ENCODE measurements at regions of chr20 and their contacts with region 1.

Region 1: DNA sequence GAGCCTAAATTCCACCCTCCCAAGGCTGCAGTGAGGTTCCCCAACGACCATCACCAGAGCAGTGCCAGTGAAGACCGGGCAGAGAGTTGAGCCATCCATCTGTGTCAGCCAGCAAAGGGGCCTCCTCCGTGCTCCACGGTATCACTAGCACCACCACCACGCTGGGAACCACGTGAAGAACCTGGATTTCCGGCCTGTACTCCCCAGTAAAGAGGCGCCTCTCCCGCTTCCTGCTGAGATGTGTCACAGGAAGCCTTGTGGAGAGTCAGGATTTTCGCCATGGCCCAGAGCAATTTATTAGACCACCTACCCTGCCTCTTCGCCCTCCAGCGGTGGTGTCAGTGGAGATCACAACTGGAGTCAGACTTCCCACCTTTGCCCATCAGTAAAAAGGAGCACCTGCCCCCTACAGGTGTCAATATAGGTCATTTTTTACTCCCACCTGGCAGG is 28.8 kb downstream of the CPXM1 start:
- DNase-seq: peak; percentile 40
- ATAC-seq: peak; percentile 13; the same call in 1 of the 2 replicates
- H3K4me3 ChIP-seq: no peak overlapping the region
- H3K27ac ChIP-seq: no peak overlapping the region
- H3K4me1 ChIP-seq: peaks cover 23% of the 10 kb centered on the region
- H3K27me3 ChIP-seq: no peaks in the 10 kb centered on the region
- CTCF ChIP-seq: no peak; the same call in 1 of the 2 replicates

Region 2: DNA sequence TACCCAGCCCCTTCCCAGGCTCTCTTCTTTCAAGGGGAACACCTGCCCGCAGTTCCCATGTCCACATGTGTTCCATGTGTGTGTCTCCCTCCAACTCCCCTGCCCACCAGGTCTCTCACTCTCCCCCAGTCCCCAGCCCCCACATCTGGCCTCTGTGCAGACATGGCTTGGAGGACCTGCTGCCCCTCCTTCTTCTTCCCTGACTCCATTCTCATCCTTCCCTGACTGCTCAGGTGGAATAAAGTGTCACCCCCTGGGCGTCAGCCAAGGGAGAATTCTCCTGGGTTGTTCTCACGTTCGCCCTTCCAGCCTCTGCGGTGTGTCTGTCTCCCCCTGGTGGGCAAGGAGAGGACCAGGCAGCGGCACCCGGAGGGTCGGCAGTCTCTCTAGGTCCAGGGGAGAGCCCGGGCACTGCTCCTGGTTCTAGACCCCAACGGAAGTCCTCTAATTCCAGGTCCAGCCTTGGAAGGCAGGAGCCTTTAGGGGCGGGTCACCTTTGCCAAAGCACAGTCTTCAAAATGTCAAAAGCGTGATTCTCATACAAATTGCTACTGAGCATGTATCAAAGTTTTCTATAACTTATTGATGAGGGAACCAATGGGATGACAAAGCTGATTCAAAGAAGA is 28.6 kb before region 1 on chr20:
- CTCF ChIA-PET with region 1: no interaction called
- POLR2A ChIA-PET with region 1: no interaction called
- intact Hi-C with region 1: no loop called
- DNase-seq: peak; percentile 86
- ATAC-seq: peak; percentile 78
- H3K4me3 ChIP-seq: no peak overlapping the region; the same call in 1 of the 2 replicates
- H3K27ac ChIP-seq: no peak overlapping the region
- H3K4me1 ChIP-seq: 0 out of 2 replicates have a peak, but pooled peaks cover 5% of the 10 kb centered on the region
- H3K27me3 ChIP-seq: no peaks in the 10 kb centered on the region; the same call in 1 of the 2 replicates
- CTCF ChIP-seq: peak; percentile 98

Region 3: GRCh38 chr20:2804852-2805688 is 33.4 kb after region 1 on chr20:
- CTCF ChIA-PET with region 1: no interaction called
- POLR2A ChIA-PET with region 1: no interaction called
- intact Hi-C with region 1: no loop called
- DNase-seq: no peak
- ATAC-seq: no peak
- H3K4me3 ChIP-seq: no peak overlapping the region
- H3K27ac ChIP-seq: no peak overlapping the region
- H3K4me1 ChIP-seq: no peaks in the 10 kb centered on the region
- H3K27me3 ChIP-seq: no peaks in the 10 kb centered on the region
- CTCF ChIP-seq: no peak

Region 4: GRCh38 chr20:2829376-2829775 is 57.7 kb after region 1 on chr20:
- CTCF ChIA-PET with region 1: interaction called, 12 read pairs
- POLR2A ChIA-PET with region 1: no interaction called
- intact Hi-C with region 1: no loop called
- DNase-seq: no peak
- ATAC-seq: no peak
- H3K4me3 ChIP-seq: no peak overlapping the region
- H3K27ac ChIP-seq: no peak overlapping the region
- H3K4me1 ChIP-seq: peaks cover 16% of the 10 kb centered on the region
- H3K27me3 ChIP-seq: no peaks in the 10 kb centered on the region
- CTCF ChIP-seq: no peak

Region 5: DNA sequence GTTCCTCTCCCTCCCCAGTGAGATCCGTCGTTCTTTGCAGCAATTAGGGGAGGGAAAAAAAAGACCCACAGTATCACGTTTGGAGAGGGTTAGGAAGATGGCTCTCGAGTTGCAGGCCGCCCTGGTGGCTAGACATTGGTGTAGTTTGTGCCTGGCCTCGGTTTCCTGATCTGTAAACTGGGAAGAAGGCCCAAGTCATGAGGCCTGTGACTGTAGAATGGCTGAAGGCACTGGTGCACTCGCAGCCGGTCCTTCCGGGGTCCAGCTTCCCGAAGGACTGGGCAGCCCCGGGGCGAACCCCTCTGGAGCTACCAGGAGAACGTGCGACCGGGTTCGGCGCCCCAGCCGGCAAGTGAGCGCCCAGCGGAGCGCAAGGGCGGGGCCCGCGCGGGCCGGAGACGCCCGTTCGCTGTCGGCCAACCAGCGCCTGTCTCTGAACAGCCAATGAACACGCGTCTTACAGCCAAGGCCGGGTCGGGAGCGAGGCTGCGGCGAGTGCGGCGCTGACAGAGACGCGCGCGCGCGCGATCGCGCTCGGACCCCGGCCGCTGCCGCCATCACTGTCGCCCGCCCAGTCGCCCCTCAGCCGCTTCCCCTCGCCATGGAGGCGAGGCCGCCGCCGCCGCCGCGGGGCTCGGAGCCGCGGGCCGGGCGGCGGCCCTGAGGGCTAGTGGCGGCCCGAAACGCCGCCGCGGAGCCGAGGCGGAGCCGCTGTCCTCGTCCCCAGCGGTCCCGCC is 101.5 kb after region 1 on chr20 and contains the start of gene PTPRA:
- CTCF ChIA-PET with region 1: no interaction called
- POLR2A ChIA-PET with region 1: no interaction called
- intact Hi-C with region 1: no loop called
- DNase-seq: peak; percentile 95
- ATAC-seq: peak; percentile 90
- H3K4me3 ChIP-seq: peak within 1 kb of the TSS; percentile 99
- H3K27ac ChIP-seq: no peak within 1 kb of the TSS; the same call in 1 of the 2 replicates
- H3K4me1 ChIP-seq: peaks cover 40% of the 10 kb centered on the region
- H3K27me3 ChIP-seq: no peaks in the 10 kb centered on the region
- CTCF ChIP-seq: no peak
- total RNA-seq, gene PTPRA: 33.6 and 35.0 TPM in 2 replicates

Measured in PC-3 (cell line).